IMR-90 (cell line): ENCODE measurements at regions of chr2 and their contacts with region 1.

Region 1: GRCh38 chr2:174027956-174028355 is 62.8 kb upstream of the SP3 start:
- DNase-seq: no peak
- ATAC-seq: no peak
- H3K4me3 ChIP-seq: no peak overlapping the region
- H3K27ac ChIP-seq: peak overlapping the region; percentile 11; the same call in 1 of the 2 replicates
- H3K4me1 ChIP-seq: peaks cover 33% of the 10 kb centered on the region
- H3K27me3 ChIP-seq: no peaks in the 10 kb centered on the region
- CTCF ChIP-seq: no peak
- POLR2A ChIP-seq: no peak
- RAD21 ChIP-seq: no peak

Region 2: GRCh38 chr2:173993459-173993858 is 34.5 kb before region 1 on chr2:
- CTCF ChIA-PET with region 1: no interaction called
- POLR2A ChIA-PET with region 1: no interaction called
- dilution Hi-C with region 1: no loop called
- in situ Hi-C with region 1: no loop called
- intact Hi-C with region 1: no loop called
- DNase-seq: no peak
- ATAC-seq: no peak
- H3K4me3 ChIP-seq: no peak overlapping the region
- H3K27ac ChIP-seq: no peak overlapping the region
- H3K4me1 ChIP-seq: peaks cover 8% of the 10 kb centered on the region
- H3K27me3 ChIP-seq: peaks cover 4% of the 10 kb centered on the region; the same call in 1 of the 2 replicates
- CTCF ChIP-seq: no peak
- POLR2A ChIP-seq: no peak
- RAD21 ChIP-seq: no peak

Region 3: GRCh38 chr2:174062934-174063333 is 35.0 kb after region 1 on chr2:
- CTCF ChIA-PET with region 1: no interaction called
- POLR2A ChIA-PET with region 1: interaction called, 15 read pairs
- dilution Hi-C with region 1: no loop called
- in situ Hi-C with region 1: no loop called
- intact Hi-C with region 1: no loop called
- DNase-seq: no peak
- ATAC-seq: no peak
- H3K4me3 ChIP-seq: no peak overlapping the region
- H3K27ac ChIP-seq: no peak overlapping the region
- H3K4me1 ChIP-seq: peaks cover 9% of the 10 kb centered on the region; the same call in 1 of the 2 replicates
- H3K27me3 ChIP-seq: no peaks in the 10 kb centered on the region
- CTCF ChIP-seq: no peak
- POLR2A ChIP-seq: no peak
- RAD21 ChIP-seq: no peak

Region 4: DNA sequence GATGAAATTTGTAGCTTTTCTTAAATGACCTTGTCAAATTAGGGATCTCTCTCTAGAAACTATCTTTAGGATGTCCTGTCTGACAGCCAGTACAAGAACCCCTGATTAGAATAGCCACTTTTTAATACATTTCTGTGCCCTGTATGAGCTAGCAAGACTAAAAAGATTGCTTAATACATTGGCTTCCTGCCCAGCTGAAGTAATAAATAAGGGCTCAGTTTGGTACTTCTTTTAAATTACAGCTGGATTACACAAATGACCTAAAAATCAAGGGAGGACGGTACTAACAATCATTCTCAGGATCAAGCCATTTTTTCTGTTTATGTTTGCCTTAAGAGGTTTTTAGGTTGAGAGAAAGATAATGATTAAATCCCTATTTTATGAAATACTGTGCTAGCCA is 232.0 kb after region 1 on chr2:
- CTCF ChIA-PET with region 1: no interaction called
- POLR2A ChIA-PET with region 1: no interaction called
- dilution Hi-C with region 1: no loop called
- in situ Hi-C with region 1: no loop called
- intact Hi-C with region 1: no loop called
- DNase-seq: peak; percentile 85
- ATAC-seq: peak; percentile 80
- H3K4me3 ChIP-seq: no peak overlapping the region
- H3K27ac ChIP-seq: no peak overlapping the region
- H3K4me1 ChIP-seq: no peaks in the 10 kb centered on the region
- H3K27me3 ChIP-seq: no peaks in the 10 kb centered on the region; the same call in 1 of the 2 replicates
- CTCF ChIP-seq: no peak
- POLR2A ChIP-seq: no peak
- RAD21 ChIP-seq: no peak